ENCODE measurements at regions of chr17 and their contacts with region 1.

Region 1: GRCh38 chr17:7687908-7688807 is at the start of gene WRAP53:
- DNase-seq: peak; percentile 99
- H3K4me3 ChIP-seq: peak within 1 kb of the TSS; percentile 77 to 97 (median 94)
- H3K27ac ChIP-seq: peak within 1 kb of the TSS; percentile 93 to 98 (median 98)
- H3K4me1 ChIP-seq: peaks cover 30 to 55% (median 43%) of the 10 kb centered on the region in 6 donors
- H3K27me3 ChIP-seq: no peaks in the 10 kb centered on the region
- CTCF ChIP-seq: peak; percentile 94 to 100 (median 99)
- POLR2A ChIP-seq: no peak
- total RNA-seq, gene WRAP53: 8.5 to 10.6 (median 9.5) TPM

Region 2: GRCh38 chr17:7557775-7558543 is 130.2 kb before region 1 on chr17:
- intact Hi-C with region 1: no loop called
- DNase-seq: peak; percentile 95
- H3K4me3 ChIP-seq: peak overlapping the region; percentile 13 to 96 (median 55)
- H3K27ac ChIP-seq: peak overlapping the region; percentile 81 to 98 (median 94)
- H3K4me1 ChIP-seq: peaks cover 37 to 95% (median 67%) of the 10 kb centered on the region in 6 donors
- H3K27me3 ChIP-seq: no peaks in the 10 kb centered on the region
- CTCF ChIP-seq: peak in 2 of 11 experiments; percentile 19 to 28
- POLR2A ChIP-seq: peak in 1 of 3 donors; percentile 5

Region 3: DNA sequence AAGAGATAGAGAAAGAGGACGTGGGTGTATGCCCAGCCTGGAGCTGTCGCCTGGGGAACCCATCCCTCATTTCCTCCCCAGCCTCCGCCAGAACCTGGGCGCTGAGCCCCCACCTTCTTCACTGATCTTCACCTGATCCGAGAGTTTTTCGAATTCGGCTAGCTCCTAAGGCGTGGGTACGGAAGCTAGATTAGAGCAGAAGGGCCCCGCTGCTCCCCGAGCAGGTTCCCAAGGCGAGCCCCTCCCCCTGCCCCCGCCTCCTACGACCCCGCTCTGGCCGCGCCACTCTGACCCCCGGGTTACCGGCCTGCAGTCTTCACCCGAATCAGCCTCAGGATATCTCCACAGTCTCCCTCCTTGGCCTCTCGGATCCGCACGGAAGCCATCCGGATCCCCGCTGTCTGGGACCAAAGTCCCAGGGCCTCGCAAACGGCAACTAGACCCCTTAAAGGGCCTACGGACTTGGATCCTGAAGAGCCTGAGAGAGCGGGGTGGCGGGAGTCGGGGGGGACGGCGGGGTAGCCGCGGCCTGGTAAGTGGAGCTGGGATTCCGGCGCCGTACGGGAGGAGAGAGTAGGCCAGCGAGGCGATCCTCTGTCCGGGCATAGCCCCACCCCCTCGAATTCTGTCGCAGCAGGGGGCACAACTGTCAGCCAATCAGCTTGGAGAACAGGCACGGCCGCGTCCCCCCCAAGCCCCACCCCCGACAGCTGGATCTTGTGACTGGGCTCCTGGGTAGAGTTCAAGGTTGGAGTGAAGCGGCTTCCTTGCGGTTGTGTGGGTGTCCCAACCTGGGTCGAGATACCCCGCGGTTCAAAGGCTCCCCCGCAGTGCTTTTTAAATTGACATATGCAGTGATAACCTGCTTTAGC is 60.7 kb before region 1 on chr17 and contains the start of gene SAT2:
- intact Hi-C with region 1: loop called (anchors 10 kb)
- DNase-seq: peak; percentile 96
- H3K4me3 ChIP-seq: peak within 1 kb of the TSS; percentile 52 to 84 (median 58)
- H3K27ac ChIP-seq: peak within 1 kb of the TSS; percentile 82 to 97 (median 91)
- H3K4me1 ChIP-seq: peaks cover 9 to 29% (median 19%) of the 10 kb centered on the region in 6 donors
- H3K27me3 ChIP-seq: no peaks in the 10 kb centered on the region
- CTCF ChIP-seq: no peak
- POLR2A ChIP-seq: peak in 2 of 3 donors; percentile 8 to 68
- total RNA-seq, gene SAT2: 65.1 to 98.6 (median 80.6) TPM

Measured in spleen (tissue), 13 donors.